HCT116 (cell line): ENCODE measurements at regions of chr12 and their contacts with region 1.

Region 1: DNA sequence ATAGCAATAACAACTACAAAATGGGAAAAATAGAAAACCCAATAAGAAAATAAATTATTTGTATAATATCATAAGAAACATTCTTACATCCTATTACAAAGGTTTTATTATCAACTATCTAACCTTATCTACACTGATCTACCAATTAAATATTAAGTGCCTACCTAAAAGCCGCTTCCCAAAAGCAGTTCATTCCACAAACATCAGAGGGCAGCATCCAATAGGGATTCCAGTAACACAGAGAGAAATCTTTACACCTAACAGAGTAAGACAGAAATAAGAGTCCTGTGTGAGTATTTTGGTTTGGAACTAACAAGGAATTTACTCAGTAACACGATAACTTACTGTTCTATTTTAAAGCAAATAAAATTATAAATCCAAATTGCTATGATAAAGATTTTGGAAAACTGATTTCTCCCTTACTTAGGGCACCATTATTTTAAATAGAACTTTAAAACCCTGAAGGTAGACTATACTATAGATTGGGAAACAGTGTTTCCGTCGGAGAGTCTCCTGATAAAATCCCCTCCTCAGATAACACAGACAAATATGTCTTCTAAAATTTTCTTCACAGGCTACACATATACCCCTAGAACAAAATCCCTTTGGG is 15.0 kb downstream of the GXYLT1 start:
- DNase-seq: peak; percentile 61
- ATAC-seq: peak; percentile 88
- H3K4me3 ChIP-seq: no peak overlapping the region
- H3K27ac ChIP-seq: no peak overlapping the region
- H3K4me1 ChIP-seq: peaks cover 0 to 13% of the 10 kb centered on the region in 2 experiments; a peak in 2 of 4 replicates
- H3K27me3 ChIP-seq: no peaks in the 10 kb centered on the region
- CTCF ChIP-seq: peak; percentile 74 to 85 (median 83)
- POLR2A ChIP-seq: no peak
- RAD21 ChIP-seq: peak; percentile 91

Region 2: GRCh38 chr12:42284157-42284556 is 154.5 kb after region 1 on chr12:
- CTCF ChIA-PET with region 1: no interaction called
- POLR2A ChIA-PET with region 1: no interaction called
- RAD21 ChIA-PET with region 1: interaction called in 1 of 2 experiments, 19 read pairs
- intact Hi-C with region 1: no loop called
- DNase-seq: no peak
- ATAC-seq: no peak
- H3K4me3 ChIP-seq: no peak overlapping the region
- H3K27ac ChIP-seq: no peak overlapping the region
- H3K4me1 ChIP-seq: no peaks in the 10 kb centered on the region
- H3K27me3 ChIP-seq: no peaks in the 10 kb centered on the region
- CTCF ChIP-seq: no peak
- POLR2A ChIP-seq: no peak
- RAD21 ChIP-seq: no peak

Region 3: DNA sequence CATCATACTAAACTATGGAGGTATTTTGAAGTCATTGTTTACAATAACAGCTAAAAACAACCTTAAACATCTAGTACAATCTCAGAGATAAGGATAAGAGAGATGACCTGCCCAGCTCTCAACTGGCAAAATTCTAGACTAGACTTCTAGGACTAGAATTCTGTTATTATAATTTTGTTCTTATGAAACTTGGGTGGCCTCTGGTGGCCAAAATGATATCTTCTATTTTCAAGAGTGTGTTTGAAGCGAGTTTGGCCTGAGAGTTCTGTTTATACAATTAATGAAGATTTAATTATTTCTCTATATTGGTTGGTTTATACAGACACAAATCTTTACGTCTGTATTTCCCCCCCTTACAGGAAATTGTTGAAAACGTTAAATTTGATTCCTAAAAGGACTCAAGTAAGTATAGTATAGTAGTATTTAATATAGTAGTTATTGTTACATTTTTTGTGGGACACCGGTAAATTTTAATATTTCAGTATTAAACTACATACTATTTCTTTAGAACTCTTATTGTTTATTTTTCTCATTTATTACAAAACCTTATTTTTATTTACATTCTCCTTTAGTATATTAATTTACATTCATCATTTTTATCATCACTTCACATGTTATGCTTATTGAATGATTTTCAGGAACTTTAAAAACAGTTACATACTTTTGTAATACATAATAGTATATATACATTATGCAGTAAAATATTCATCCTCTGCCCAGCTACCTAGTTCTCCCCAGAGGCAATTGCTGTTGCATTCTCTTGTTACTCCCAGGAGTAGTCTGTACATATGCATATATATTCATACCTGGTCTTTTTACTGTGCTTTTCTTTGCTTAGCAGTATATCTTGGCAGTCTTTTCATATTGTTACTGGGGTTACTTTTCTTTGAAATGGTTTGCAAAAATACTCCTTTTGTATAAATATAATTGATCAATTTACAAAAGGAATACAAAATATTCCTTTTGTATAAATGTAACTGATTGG is 202.9 kb after region 1 on chr12:
- CTCF ChIA-PET with region 1: interaction called, 6 read pairs
- POLR2A ChIA-PET with region 1: no interaction called
- RAD21 ChIA-PET with region 1: no interaction called
- intact Hi-C with region 1: loop called (anchors 1 kb)
- DNase-seq: peak; percentile 29
- ATAC-seq: peak; percentile 73
- H3K4me3 ChIP-seq: no peak overlapping the region
- H3K27ac ChIP-seq: no peak overlapping the region
- H3K4me1 ChIP-seq: peaks cover 0 to 1% of the 10 kb centered on the region in 2 experiments; a peak in 2 of 4 replicates
- H3K27me3 ChIP-seq: no peaks in the 10 kb centered on the region
- CTCF ChIP-seq: peak; percentile 43 to 63 (median 63); a peak in 5 of 6 replicates
- POLR2A ChIP-seq: no peak
- RAD21 ChIP-seq: peak; percentile 71